Activated naive CD4-positive, alpha-beta T cell treated with anti-CD3 and anti-CD28 coated beads for 36 hours (primary cell): ENCODE measurements at regions of chr3 and their contacts with region 1.

Region 1: DNA sequence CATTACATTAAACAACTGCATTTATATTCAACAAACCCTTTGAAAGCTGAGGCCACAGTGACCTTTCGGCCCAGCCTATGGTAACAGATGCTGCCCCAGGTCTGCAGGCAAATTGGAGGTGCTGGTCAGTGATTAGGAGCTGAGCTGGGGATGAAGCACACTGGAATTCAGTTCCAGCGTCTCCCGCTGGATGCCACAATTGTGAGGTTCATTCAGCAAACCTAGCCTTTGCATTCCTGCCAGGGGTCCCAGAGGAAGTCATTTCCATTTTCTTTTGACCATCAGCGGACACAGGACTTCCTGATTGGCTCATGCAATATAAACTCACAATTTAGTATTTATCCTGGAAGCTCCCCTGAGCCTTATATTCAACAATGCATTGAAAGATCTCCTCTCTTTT is 89.5 kb downstream of the IL20RB start:
- DNase-seq: no peak
- H3K4me3 Mint-ChIP-seq: no peak overlapping the region
- H3K27ac Mint-ChIP-seq: no peak overlapping the region
- H3K4me1 Mint-ChIP-seq: no peaks in the 10 kb centered on the region
- H3K27me3 Mint-ChIP-seq: peaks cover 4% of the 10 kb centered on the region

Region 2: DNA sequence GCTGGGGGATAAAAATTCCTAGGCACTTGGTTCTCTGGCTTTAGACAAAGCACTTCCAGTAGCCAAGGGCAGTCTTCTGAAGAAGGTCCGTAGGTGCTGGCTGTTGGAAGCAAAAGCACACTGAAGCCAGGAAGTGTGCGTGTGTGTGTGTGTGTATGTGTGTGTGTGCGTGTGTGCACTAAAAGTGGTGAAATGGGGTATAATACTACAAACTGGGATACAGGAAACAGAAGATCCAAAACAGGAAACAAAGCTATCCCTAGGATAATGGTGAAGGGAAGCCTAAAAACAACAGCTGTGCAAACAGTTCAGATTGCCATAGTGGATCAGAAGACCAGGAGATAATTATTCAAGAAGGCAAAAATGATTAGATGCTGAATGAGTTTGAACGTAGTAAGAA is 13.9 kb after region 1 on chr3:
- CTCF ChIA-PET with region 1: no interaction called
- intact Hi-C with region 1: loop called (anchors 1 kb)
- DNase-seq: no peak
- H3K4me3 Mint-ChIP-seq: no peak overlapping the region
- H3K27ac Mint-ChIP-seq: no peak overlapping the region
- H3K4me1 Mint-ChIP-seq: no peaks in the 10 kb centered on the region
- H3K27me3 Mint-ChIP-seq: no peaks in the 10 kb centered on the region

Region 3: GRCh38 chr3:137325170-137325569 is 277.9 kb after region 1 on chr3:
- CTCF ChIA-PET with region 1: no interaction called
- intact Hi-C with region 1: no loop called
- DNase-seq: no peak
- H3K4me3 Mint-ChIP-seq: no peak overlapping the region
- H3K27ac Mint-ChIP-seq: no peak overlapping the region
- H3K4me1 Mint-ChIP-seq: no peaks in the 10 kb centered on the region
- H3K27me3 Mint-ChIP-seq: no peaks in the 10 kb centered on the region